ENCODE measurements at regions of chrX and their contacts with region 1.

Region 1: GRCh38 chrX:48737213-48737938 is 24.2 kb upstream of the GLOD5 start:
- DNase-seq: peak; percentile 65
- ATAC-seq: peak; percentile 97
- H3K4me3 Mint-ChIP-seq: peak overlapping the region; percentile 91
- H3K27ac Mint-ChIP-seq: peak overlapping the region; percentile 94
- H3K4me1 Mint-ChIP-seq: peaks cover 15% of the 10 kb centered on the region
- H3K27me3 Mint-ChIP-seq: no peaks in the 10 kb centered on the region
- CTCF ChIP-seq: no peak

Region 2: DNA sequence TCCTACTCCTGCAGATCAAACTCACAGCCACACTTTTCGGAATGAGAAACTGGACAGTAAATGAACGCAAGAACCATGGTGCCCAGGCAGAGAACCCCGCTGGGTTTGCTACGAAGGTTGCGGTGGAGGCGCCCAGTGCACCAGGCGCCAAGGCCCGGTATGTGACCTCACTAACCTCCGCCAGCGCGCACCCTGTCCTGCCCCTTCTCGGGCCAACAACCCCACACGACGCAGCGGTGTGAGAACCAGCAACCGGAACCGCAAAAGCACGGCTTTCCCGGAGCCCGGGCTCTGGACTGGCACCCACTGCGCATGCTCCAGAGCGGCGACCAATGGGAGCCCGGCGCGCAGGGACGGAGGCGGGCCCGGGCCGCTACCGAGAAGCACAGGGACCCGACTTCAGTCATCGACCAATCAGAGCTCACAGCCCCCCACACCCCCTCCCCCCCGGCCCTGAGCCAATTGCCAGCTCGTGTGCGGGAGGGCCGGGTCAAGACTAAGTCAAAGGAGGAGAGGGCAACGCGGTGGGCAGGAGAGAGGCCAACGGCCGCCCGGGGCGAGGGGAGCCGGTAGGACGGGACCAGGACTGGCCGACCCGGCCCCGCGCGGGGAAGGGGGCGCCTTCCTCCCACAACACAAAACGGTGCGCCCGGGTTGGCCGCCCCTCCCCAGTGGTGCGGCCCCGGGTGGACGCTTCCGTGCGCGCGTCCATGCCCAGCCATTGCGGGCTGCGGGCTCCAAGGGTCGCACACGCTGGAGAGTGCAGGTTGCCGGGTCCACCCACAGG is 61.1 kb before region 1 on chrX:
- CTCF ChIA-PET with region 1: no interaction called
- POLR2A ChIA-PET with region 1: interaction called, 12 read pairs
- intact Hi-C with region 1: loop called (anchors 1 kb)
- DNase-seq: peak; percentile 79
- ATAC-seq: peak; percentile 94
- H3K4me3 Mint-ChIP-seq: peak overlapping the region; percentile 89
- H3K27ac Mint-ChIP-seq: peak overlapping the region; percentile 88
- H3K4me1 Mint-ChIP-seq: peaks cover 22% of the 10 kb centered on the region
- H3K27me3 Mint-ChIP-seq: no peaks in the 10 kb centered on the region
- CTCF ChIP-seq: no peak

Region 3: GRCh38 chrX:48683411-48683982 is 53.9 kb before region 1 on chrX and contains the start of gene WAS:
- CTCF ChIA-PET with region 1: no interaction called
- POLR2A ChIA-PET with region 1: interaction called, 18 read pairs
- intact Hi-C with region 1: no loop called
- DNase-seq: peak; percentile 20
- ATAC-seq: peak; percentile 87
- H3K4me3 Mint-ChIP-seq: peak within 1 kb of the TSS; percentile 93
- H3K27ac Mint-ChIP-seq: peak within 1 kb of the TSS; percentile 94
- H3K4me1 Mint-ChIP-seq: peaks cover 58% of the 10 kb centered on the region
- H3K27me3 Mint-ChIP-seq: no peaks in the 10 kb centered on the region
- CTCF ChIP-seq: no peak
- total RNA-seq, gene WAS: 101 and 102 TPM in 2 replicates

Region 4: DNA sequence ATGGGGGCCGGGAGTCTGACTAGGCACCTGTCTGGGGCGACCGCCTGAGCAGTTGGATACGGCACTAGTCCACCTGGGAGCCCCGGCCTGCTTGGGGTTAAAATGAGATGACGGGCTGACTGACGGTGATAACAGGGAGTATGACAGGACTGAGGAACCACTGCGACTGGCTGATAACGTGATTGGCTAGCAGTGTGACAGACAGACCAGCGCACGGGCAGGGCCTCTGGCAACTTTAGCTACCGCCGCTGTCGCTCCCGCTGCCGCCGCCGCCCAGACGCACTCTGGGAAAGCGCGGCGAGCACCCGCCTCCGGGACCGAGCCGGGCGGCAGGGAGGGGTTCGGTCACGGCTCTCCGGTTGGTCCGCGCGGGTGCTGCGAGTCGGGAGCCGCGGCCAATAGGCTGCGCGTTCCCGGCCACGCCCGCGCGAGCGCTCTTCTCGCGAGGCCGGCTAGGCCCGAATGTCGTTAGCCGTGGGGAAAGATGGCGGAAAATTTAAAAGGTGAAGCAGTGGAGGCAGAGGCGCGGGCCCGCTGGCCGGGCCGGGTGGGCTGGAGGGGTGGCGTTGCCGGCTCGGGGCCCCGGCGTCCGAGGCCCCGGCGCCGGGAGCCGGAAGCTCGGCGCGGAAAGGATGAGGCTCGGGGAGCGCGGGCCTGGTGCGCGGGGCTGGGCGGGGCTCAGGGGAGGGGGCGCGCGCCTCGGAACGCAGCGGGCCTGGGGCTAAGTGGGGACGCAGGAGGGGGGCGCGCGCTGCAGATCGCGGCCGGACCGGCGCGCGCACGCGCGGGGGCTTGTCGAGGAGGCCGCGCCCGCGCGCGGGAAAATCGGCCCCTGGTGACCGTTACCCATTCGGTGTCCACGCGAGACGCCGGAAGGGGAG is 40.8 kb before region 1 on chrX and contains the start of gene SUV39H1:
- CTCF ChIA-PET with region 1: no interaction called
- POLR2A ChIA-PET with region 1: interaction called, 12 read pairs
- intact Hi-C with region 1: loop called (anchors 1 kb)
- DNase-seq: peak; percentile 70
- ATAC-seq: peak; percentile 96
- H3K4me3 Mint-ChIP-seq: peak within 1 kb of the TSS; percentile 88
- H3K27ac Mint-ChIP-seq: peak within 1 kb of the TSS; percentile 91
- H3K4me1 Mint-ChIP-seq: peaks cover 19% of the 10 kb centered on the region
- H3K27me3 Mint-ChIP-seq: no peaks in the 10 kb centered on the region
- CTCF ChIP-seq: no peak
- total RNA-seq, gene SUV39H1: 9.1 and 10.8 TPM in 2 replicates

Region 5: DNA sequence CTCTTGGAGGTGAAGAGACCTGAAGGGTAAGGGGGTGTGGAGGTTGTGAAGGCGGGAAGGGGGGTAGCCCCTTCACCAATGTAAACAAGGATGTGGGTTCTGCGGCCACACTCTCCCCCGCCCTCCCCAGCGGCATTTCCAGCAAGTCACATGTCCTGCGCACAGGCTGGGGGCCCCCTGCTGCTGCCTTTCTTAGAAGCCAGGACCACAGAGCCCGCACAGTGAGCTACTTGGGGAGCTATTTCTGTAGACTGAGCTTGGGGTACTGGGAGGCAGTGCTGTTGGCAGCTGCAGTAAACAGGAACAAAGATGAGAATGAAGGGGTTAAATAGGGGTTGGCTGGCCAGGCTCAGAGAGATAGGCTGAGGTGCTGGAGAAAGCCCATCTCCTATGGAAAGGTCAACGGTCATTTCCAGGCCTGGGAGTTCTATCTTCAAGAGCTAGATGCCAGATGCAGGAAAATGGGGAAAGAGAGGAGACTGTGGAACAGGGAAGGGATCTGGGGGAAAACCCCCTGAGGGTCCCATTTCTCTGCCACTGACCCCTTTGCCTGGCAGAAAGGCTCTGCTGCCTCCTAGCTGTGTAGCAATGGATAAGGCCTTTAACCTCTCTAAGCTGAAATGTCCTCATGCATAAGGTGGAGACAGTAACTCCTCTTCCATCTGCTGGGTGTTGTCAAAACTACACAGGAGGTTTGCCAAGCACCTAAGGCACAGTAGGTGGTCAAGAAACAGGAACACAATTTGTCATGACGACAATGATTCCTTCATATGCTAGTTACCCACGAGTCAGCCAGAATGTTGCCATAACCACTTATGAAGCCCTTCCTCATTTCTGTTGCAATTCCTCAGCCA is 199.9 kb after region 1 on chrX:
- CTCF ChIA-PET with region 1: no interaction called
- POLR2A ChIA-PET with region 1: interaction called, 14 read pairs
- intact Hi-C with region 1: loop called (anchors 1 kb)
- DNase-seq: peak; percentile 68
- ATAC-seq: peak; percentile 54
- H3K4me3 Mint-ChIP-seq: peak overlapping the region; percentile 77
- H3K27ac Mint-ChIP-seq: peak overlapping the region; percentile 98
- H3K4me1 Mint-ChIP-seq: peaks cover 87% of the 10 kb centered on the region
- H3K27me3 Mint-ChIP-seq: no peaks in the 10 kb centered on the region
- CTCF ChIP-seq: no peak